GM12878 (cell line): ENCODE measurements at regions of chr5 and their contacts with region 1.

Region 1: DNA sequence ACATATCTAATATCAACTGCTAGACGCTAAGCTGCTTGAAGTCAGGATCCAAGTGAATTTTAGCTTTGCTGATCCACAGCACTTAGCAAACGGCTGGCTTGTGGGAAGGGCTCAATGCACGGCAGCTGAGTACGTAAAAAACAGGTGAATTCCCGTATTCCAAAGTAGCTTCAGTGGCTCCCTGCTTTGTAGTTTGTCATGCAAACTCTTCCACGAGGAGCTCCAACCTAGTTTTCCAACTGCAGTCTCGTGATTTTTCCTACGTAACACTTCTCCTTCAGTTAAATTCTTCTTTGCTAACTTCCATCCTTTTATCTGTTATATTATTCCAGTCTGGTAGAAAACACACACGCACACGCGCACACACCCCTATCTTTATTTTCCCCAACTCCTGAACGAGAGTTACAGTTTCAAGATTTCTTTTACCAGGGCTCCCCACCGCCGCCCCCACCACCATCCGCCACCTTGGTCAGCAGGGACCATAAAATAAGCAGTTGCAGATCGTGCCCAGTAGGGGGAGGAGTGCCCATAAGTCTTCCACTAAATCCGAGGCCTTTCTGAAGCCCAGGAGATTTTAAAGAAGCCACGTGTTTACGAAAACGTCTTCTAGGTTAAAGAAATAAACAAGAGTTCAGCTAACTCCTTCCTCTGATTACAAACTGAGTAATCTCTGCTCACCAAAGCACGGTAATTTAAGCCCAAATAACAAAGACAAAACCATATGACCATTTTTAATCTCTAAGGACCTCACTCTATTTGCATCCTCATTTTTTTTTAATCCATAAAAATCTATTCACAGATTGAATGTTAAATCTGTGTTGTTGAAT is 34.8 kb upstream of the TRIO start:
- DNase-seq: peak; percentile 44
- ATAC-seq: peak; percentile 92
- H3K4me3 ChIP-seq: peak overlapping the region; percentile 51
- H3K27ac ChIP-seq: peak overlapping the region; percentile 64
- H3K4me1 ChIP-seq: peaks cover 22% of the 10 kb centered on the region
- H3K27me3 ChIP-seq: no peaks in the 10 kb centered on the region
- CTCF ChIP-seq: peak; percentile 75 to 81 (median 77)
- EP300 ChIP-seq: no peak
- POLR2A ChIP-seq: no peak
- RAD21 ChIP-seq: peak; percentile 90

Region 2: DNA sequence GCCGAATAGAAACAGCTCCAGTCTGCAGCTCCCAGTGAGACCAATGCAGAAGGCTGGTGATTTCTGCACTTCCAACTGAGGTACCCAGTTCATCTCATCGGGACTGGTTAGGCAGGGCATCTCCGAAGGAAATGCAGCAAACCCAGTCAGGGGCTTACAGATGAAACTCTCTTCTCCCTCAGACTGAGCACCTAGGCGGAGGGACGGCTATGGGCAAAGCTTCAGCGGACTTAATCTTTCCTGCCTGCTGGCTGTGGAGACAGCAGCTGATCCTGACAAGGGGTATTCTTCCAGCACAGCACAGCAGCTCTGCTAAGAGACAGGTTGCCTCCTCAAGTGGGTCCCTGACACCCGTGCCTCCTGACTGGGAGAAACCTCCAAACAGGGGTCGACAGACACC is 494.8 kb before region 1 on chr5:
- CTCF ChIA-PET with region 1: no interaction called
- POLR2A ChIA-PET with region 1: no interaction called
- RAD21 ChIA-PET with region 1: no interaction called
- SMC1A ChIA-PET with region 1: no interaction called
- in situ Hi-C with region 1: no loop called
- intact Hi-C with region 1: no loop called
- DNase-seq: no peak
- ATAC-seq: no peak
- H3K4me3 ChIP-seq: no peak overlapping the region
- H3K27ac ChIP-seq: no peak overlapping the region
- H3K4me1 ChIP-seq: no peaks in the 10 kb centered on the region
- H3K27me3 ChIP-seq: no peaks in the 10 kb centered on the region
- CTCF ChIP-seq: no peak
- EP300 ChIP-seq: no peak
- POLR2A ChIP-seq: no peak
- RAD21 ChIP-seq: no peak

Region 3: DNA sequence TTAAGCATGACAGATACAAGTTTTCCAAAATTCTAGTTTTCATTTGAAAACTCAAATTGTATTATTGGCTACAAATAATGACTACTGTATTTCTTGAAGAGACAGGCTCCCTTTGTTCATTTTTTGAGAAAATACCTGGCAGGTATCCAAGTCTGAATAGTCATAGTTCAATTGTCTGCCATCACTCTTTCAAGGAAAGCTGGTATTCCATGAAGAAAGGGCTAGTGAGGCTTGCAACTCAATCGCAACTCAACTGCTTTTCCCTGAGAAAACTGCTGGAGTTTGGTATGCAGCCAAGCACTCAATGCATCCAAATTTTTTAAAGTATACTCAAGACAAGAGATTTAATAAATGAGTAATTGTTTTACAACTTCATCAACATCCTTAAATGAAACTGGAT is 26.6 kb before region 1 on chr5:
- CTCF ChIA-PET with region 1: no interaction called
- POLR2A ChIA-PET with region 1: no interaction called
- RAD21 ChIA-PET with region 1: no interaction called
- SMC1A ChIA-PET with region 1: no interaction called
- in situ Hi-C with region 1: no loop called
- intact Hi-C with region 1: no loop called
- DNase-seq: no peak
- ATAC-seq: no peak
- H3K4me3 ChIP-seq: no peak overlapping the region
- H3K27ac ChIP-seq: no peak overlapping the region
- H3K4me1 ChIP-seq: no peaks in the 10 kb centered on the region
- H3K27me3 ChIP-seq: peaks cover 0 to 2% of the 10 kb centered on the region in 2 experiments; a peak in 1 of 4 replicates
- CTCF ChIP-seq: no peak
- EP300 ChIP-seq: no peak
- POLR2A ChIP-seq: no peak
- RAD21 ChIP-seq: no peak

Region 4: DNA sequence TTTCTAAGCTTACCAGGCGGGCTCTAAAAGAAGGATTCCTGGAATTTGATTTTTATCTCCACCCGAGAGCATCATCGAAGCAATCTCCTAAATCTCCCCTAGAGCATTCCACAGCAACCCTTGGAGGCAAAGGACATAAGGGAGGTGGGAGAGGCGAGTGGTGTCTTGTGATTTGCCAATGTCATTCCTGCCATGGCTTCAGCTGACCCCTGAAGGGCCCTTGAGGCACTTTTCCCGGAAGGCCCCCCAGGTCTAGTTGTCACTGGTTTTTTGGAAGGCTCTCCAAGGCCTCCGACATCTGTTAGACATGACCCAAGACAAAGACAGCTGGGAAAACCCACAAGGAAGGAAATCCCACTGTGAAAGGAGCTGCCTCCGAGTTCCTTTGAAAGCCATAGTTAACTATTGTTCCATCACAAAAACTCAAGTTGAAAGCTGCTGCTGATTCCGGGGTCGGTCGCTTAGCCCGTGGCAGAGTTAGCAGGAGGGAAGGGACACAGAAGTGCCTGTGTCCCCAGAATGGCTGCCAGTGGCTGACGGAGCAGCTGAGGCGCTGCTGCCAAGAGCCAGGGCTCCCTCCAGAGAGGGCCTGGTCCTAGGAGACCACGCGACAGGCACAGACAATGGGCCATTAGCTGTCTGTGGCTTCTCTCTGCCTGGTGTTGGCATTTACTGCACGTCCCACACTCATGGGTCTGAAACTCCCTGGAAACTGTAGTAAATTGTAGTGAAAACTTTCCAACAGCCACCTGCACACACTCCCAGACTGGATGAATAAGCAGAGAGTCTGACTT is 10.3 kb after region 1 on chr5:
- CTCF ChIA-PET with region 1: interaction called, 25 read pairs
- POLR2A ChIA-PET with region 1: no interaction called
- RAD21 ChIA-PET with region 1: interaction called, 11 read pairs
- SMC1A ChIA-PET with region 1: interaction called, 10 read pairs
- in situ Hi-C with region 1: no loop called
- intact Hi-C with region 1: no loop called
- DNase-seq: no peak
- ATAC-seq: no peak
- H3K4me3 ChIP-seq: no peak overlapping the region
- H3K27ac ChIP-seq: no peak overlapping the region
- H3K4me1 ChIP-seq: no peaks in the 10 kb centered on the region
- H3K27me3 ChIP-seq: no peaks in the 10 kb centered on the region
- CTCF ChIP-seq: no peak
- EP300 ChIP-seq: no peak
- POLR2A ChIP-seq: no peak
- RAD21 ChIP-seq: no peak

Region 5: DNA sequence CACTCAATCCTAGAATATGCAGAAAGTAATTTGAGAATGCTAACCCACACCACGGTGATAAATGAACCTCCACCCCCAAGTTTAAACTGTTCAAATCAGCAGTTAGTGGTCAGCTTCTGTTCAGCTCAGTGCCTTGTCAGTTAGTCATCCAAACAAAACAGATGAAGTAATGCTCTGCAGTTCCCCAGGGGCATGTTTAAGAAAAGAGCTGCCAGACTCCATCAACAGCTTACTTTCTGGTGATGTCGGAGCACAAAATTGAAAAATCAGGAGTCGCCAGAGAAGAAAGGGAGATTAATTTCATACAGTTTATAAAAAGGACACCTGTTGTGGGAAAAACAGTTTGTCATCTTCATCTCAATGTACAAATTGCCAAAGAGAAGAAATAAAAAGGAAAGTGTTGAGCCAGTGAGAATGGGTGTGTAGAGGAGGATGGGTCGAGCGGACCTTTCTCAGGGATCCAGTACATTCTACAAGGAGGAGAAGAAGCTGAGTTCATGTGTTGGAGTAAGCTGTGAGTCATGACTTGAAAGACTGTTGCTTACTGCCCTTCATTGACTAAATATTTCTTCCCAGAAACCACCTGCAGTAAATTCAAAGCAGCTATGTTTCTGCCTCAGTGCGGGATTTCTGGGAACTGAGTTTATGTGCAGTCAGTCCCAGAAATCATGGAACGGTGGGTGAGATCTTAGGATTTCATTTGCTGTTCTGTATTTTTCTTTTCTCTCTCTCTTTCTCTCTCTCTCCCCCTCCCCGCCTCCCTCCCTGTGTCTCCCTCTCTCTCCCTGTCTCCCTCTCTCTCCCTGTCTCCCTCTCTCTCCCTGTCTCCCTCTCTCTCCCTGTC is 48.5 kb after region 1 on chr5:
- CTCF ChIA-PET with region 1: interaction called, 6 read pairs
- POLR2A ChIA-PET with region 1: interaction called, 3 read pairs
- RAD21 ChIA-PET with region 1: interaction called, 22 read pairs
- SMC1A ChIA-PET with region 1: interaction called, 7 read pairs
- in situ Hi-C with region 1: no loop called
- intact Hi-C with region 1: no loop called
- DNase-seq: peak; percentile 67
- ATAC-seq: peak; percentile 75
- H3K4me3 ChIP-seq: peak overlapping the region; percentile 20
- H3K27ac ChIP-seq: peak overlapping the region; percentile 92
- H3K4me1 ChIP-seq: peaks cover 60% of the 10 kb centered on the region
- H3K27me3 ChIP-seq: no peaks in the 10 kb centered on the region
- CTCF ChIP-seq: no peak
- EP300 ChIP-seq: peak in 1 of 2 experiments; percentile 61; a peak in 2 of 4 replicates
- POLR2A ChIP-seq: peak; percentile 39; the same call in 1 of the 2 replicates
- RAD21 ChIP-seq: peak; percentile 8; the same call in 1 of the 2 replicates

Region 6: GRCh38 chr5:14258840-14259239 is 150.5 kb after region 1 on chr5:
- CTCF ChIA-PET with region 1: interaction called, 137 read pairs
- POLR2A ChIA-PET with region 1: no interaction called
- RAD21 ChIA-PET with region 1: interaction called, 16 read pairs
- SMC1A ChIA-PET with region 1: interaction called, 22 read pairs
- in situ Hi-C with region 1: no loop called
- intact Hi-C with region 1: no loop called
- DNase-seq: no peak
- ATAC-seq: peak; percentile 65
- H3K4me3 ChIP-seq: peak overlapping the region; percentile 56; the same call in 1 of the 2 replicates
- H3K27ac ChIP-seq: peak overlapping the region; percentile 14
- H3K4me1 ChIP-seq: peaks cover 37% of the 10 kb centered on the region
- H3K27me3 ChIP-seq: no peaks in the 10 kb centered on the region
- CTCF ChIP-seq: peak in 2 of 3 experiments; percentile 24 to 33; a peak in 1 of 6 replicates
- EP300 ChIP-seq: no peak
- POLR2A ChIP-seq: no peak
- RAD21 ChIP-seq: no peak

Region 7: DNA sequence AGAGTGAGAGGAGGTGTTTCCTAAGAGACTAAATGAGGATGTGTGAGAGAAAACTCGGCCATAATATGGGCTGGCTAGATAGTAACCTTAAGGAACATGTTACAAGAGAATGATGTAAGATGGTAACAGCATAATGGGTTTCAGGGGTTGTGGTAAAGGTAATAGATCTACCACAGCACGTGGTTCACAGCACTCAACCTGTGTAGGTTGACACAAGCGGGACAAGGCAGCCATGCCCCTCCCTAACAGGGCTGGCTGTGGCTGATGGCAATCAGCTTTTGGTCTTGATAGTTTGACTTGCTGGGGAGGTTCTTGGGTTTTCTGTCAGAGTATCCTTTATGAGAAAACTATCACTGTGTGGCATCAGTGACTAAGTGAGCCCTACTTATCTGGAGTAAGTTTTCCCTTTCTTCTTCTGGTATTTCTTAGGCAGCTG is 173.4 kb after region 1 on chr5:
- CTCF ChIA-PET with region 1: interaction called, 12 read pairs
- POLR2A ChIA-PET with region 1: interaction called, 5 read pairs
- RAD21 ChIA-PET with region 1: interaction called, 13 read pairs
- SMC1A ChIA-PET with region 1: interaction called, 16 read pairs
- in situ Hi-C with region 1: no loop called
- intact Hi-C with region 1: no loop called
- DNase-seq: no peak
- ATAC-seq: peak; percentile 88
- H3K4me3 ChIP-seq: no peak overlapping the region
- H3K27ac ChIP-seq: no peak overlapping the region
- H3K4me1 ChIP-seq: peaks cover 14% of the 10 kb centered on the region
- H3K27me3 ChIP-seq: no peaks in the 10 kb centered on the region
- CTCF ChIP-seq: no peak
- EP300 ChIP-seq: peak in 1 of 2 experiments; percentile 47; a peak in 1 of 4 replicates
- POLR2A ChIP-seq: no peak
- RAD21 ChIP-seq: no peak

Region 8: DNA sequence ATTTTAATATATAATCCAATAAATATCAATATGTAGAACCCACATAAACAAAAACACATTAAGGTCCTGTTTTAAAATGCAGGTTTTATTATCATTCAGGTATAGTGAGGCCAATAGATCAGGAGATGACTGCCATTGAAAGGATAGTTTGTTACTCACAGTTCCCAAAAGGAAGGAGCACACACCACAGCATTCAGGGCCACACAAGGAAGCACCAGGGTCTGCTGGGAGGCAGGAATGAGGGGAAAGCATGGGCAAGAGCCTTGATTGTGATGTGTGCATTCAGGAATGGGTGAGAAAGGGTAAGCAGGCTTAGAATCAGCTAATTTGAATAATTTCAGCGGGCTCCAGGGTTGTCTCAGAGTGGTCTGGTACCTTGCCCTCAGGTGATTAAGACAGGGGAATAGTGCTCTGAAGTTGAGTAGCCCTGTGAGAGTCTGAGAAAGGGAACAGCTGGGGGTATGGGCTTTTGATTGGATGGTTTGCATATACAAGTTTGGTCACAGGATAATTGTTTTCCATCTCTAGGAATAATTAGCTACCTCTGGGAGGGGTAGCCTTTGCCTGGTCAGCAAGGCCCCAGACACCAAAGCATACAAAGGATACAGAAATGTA is 536.3 kb after region 1 on chr5:
- CTCF ChIA-PET with region 1: interaction called, 13 read pairs
- POLR2A ChIA-PET with region 1: no interaction called
- RAD21 ChIA-PET with region 1: interaction called, 5 read pairs
- SMC1A ChIA-PET with region 1: no interaction called
- in situ Hi-C with region 1: no loop called
- intact Hi-C with region 1: no loop called
- DNase-seq: no peak
- ATAC-seq: no peak
- H3K4me3 ChIP-seq: no peak overlapping the region
- H3K27ac ChIP-seq: no peak overlapping the region
- H3K4me1 ChIP-seq: no peaks in the 10 kb centered on the region
- H3K27me3 ChIP-seq: no peaks in the 10 kb centered on the region
- CTCF ChIP-seq: no peak
- EP300 ChIP-seq: no peak
- POLR2A ChIP-seq: no peak
- RAD21 ChIP-seq: no peak